ENCODE measurements at regions of chr6 and their contacts with region 1.

Region 1: GRCh38 chr6:52419809-52420670 is at the start of gene EFHC1:
- DNase-seq: peak; percentile 79
- H3K4me3 ChIP-seq: peak within 1 kb of the TSS; percentile 74
- CTCF ChIP-seq: no peak

Region 2: DNA sequence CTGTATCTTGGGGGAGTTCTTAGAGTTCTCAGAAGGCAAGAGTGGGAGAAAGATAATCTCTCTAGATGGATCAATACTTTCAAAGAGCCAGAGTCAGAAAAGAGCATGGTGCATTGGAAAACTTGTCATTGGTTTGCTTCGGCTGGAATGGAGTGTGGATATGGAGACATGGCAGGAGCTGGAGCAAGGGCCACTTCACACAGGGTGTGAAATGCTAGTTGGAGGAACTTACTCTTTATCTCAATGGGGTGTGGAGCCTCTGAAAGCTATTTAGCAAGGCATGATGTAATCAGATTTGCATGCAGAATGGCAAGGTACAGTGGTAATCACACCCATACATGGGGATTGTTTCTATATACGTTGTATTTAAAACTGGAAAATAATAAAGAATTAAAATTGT is 89.6 kb before region 1 on chr6:
- CTCF ChIA-PET with region 1: no interaction called
- POLR2A ChIA-PET with region 1: no interaction called
- DNase-seq: no peak
- H3K4me3 ChIP-seq: no peak overlapping the region
- CTCF ChIP-seq: no peak

Region 3: DNA sequence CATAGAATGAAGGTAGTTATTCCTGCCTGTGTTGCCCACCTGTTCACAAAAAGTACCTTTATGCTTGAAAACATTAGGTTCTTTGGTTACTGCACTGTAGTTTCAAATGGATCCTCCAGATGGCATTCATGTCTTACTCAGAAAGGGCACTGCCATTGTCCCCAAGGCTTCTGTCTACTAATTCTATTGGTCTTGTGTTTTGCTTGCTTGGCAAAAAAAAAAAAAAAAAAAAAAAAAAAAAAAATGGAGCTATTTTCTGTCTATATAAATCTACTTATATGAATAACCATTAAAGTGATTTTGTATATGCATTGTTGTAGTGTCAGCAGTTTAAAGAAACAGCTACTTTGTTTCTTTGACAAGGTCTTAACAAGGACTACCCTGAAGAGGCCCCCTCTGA is 12.6 kb before region 1 on chr6:
- CTCF ChIA-PET with region 1: interaction called, 61 read pairs
- POLR2A ChIA-PET with region 1: no interaction called
- DNase-seq: no peak
- H3K4me3 ChIP-seq: no peak overlapping the region
- CTCF ChIP-seq: peak; percentile 47

Region 4: GRCh38 chr6:52537001-52537753 is 117.1 kb after region 1 on chr6:
- CTCF ChIA-PET with region 1: interaction called, 16 read pairs
- POLR2A ChIA-PET with region 1: interaction called, 6 read pairs
- DNase-seq: no peak
- H3K4me3 ChIP-seq: no peak overlapping the region
- CTCF ChIP-seq: no peak

Region 5: DNA sequence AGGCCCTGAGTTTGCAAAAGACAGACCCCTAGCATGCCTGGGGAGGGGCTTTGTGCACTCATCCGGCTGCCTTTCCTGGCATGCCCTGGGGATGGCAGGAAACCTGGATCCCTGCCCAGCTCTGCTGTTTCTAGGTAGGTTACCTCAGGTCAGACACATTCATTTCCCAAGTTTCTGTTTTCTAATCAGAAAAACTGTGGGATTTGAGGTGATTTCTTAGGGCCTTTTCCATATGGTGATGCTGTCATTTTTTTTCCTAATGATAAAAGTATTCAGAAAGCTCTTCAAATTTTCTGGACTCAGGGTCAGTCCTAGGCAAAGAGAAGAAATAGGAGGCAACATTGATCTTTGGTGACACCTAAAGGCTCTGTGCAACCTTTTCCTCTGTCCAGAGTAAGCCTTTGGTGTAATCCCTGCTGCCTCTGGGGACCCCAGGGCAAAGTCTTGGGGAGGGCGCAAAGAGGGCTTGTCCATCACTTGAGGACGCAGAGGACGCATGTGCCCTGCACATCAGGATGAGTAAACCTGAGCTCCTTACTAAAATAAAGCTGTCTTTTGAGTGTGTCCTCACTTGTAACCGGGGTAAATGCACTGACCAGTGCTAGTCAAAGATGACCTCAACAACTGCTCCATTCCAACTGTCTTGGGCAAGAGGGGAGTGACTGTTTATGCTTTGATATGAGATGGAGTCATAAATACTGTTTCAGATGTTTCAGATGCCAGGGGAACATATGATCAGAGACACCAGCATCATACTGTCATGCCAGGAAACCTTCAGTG is 170.3 kb after region 1 on chr6:
- CTCF ChIA-PET with region 1: interaction called, 109 read pairs
- POLR2A ChIA-PET with region 1: interaction called, 7 read pairs
- DNase-seq: no peak
- H3K4me3 ChIP-seq: no peak overlapping the region
- CTCF ChIP-seq: no peak

Region 6: GRCh38 chr6:52620055-52620905 is 200.2 kb after region 1 on chr6:
- CTCF ChIA-PET with region 1: no interaction called
- POLR2A ChIA-PET with region 1: no interaction called
- DNase-seq: no peak
- H3K4me3 ChIP-seq: no peak overlapping the region
- CTCF ChIP-seq: no peak

Region 7: DNA sequence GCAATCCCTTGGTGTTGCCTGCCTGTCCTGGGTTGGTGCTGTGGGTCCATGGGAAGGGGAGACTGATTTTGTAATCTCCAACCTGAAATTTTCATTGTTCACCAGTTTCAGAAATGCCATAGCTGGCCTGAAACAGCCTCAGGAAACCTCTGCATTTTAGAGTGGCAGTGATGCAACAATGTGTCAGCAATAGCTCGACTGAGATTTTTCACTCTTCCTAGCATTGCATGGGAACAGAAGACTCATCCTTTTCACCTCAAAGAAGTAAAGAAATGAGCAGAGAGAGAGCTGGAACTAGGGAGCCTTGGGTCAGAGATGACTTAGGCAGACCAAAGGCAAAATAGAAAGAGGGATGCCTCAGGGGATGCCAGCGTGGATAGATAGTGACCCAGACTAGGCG is 227.2 kb after region 1 on chr6:
- CTCF ChIA-PET with region 1: interaction called, 76 read pairs
- POLR2A ChIA-PET with region 1: no interaction called
- DNase-seq: no peak
- H3K4me3 ChIP-seq: no peak overlapping the region
- CTCF ChIP-seq: no peak

Region 8: GRCh38 chr6:52664186-52664990 is 244.3 kb after region 1 on chr6:
- CTCF ChIA-PET with region 1: interaction called, 141 read pairs
- POLR2A ChIA-PET with region 1: interaction called, 4 read pairs
- DNase-seq: peak; percentile 65
- H3K4me3 ChIP-seq: peak overlapping the region; percentile 62
- CTCF ChIP-seq: no peak

Region 9: DNA sequence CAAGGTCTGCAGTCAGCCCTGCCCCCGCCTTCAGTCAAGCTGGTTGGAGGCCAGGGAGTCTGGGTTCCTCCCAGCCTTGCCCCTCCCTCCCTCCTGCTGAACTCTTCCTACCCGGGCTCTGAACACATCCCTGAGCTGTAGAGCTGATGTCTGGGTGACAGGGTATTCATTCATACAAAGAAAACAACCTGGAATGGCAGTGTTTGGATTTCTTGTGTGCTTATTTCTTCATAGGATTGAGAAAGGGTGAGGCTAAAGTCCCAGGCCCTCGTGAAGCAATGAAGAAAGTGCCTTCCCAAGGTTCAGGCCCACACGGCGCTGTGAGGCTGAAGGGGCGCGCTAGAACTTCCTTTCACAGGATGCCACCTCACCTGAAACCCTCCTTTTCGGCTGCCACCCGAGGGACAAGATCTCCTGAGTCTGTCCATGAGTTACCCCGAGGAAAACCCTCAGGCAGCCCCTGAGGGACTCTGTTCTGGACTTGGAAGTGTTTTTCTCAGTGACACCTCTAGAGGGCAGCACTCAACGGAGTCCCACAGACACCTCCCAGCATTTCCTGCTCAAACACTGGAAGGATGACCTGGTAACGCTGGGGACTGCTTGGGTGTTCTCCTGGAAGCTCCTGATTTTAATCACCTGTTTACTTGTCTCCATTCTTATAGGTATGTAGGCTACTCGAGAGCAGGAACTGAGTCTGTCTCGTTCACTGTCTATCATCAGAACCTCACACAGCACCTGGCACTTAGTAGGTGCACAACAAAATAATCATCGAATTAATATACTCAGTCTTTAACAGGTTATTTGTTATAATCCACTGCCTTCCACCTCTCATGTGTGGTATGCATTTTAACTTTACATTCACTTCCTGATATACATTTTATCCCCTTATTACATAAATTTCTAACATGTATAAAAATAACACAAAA is 395.4 kb after region 1 on chr6:
- CTCF ChIA-PET with region 1: no interaction called
- POLR2A ChIA-PET with region 1: no interaction called
- DNase-seq: no peak
- H3K4me3 ChIP-seq: no peak overlapping the region
- CTCF ChIP-seq: peak; percentile 63

Measured in AG04449 (cell line).